Left lung (tissue), 14 donors: ENCODE measurements at regions of chr15 and their contacts with region 1.

Region 1: DNA sequence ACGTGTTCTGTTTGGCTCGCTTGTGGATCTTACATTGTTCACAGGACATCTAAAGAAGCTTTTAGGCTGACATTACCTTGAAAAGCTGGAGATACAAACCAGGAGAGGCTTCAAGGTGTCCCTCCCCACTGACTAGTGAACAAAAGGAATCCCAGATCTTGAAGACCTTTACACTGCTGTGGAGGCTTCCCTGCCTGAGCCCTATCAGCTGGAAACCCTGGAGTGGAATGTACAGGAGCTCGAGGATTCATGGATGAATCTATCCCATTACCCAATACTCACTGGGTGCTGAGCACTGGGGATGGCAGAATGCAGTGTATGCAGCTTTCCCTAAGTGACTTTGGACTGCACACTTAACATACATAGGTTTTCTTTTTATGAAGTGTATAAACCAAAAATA is 82.3 kb upstream of the MFGE8 start:
- DNase-seq: no peak
- ATAC-seq: no peak
- H3K4me3 ChIP-seq: no peak overlapping the region
- H3K27ac ChIP-seq: no peak overlapping the region
- H3K4me1 ChIP-seq: no peaks in the 10 kb centered on the region
- H3K27me3 ChIP-seq: no peaks in the 10 kb centered on the region
- CTCF ChIP-seq: no peak

Region 2: GRCh38 chr15:88932271-88932874 is 63.1 kb before region 1 on chr15:
- intact Hi-C with region 1: loop called in 1 of 2 experiments (anchors 10 kb)
- DNase-seq: no peak
- ATAC-seq: no peak
- H3K4me3 ChIP-seq: no peak overlapping the region
- H3K27ac ChIP-seq: no peak overlapping the region
- H3K4me1 ChIP-seq: no peaks in the 10 kb centered on the region
- H3K27me3 ChIP-seq: no peaks in the 10 kb centered on the region
- CTCF ChIP-seq: no peak